ENCODE measurements at regions of chr4 and their contacts with region 1.

Region 1: DNA sequence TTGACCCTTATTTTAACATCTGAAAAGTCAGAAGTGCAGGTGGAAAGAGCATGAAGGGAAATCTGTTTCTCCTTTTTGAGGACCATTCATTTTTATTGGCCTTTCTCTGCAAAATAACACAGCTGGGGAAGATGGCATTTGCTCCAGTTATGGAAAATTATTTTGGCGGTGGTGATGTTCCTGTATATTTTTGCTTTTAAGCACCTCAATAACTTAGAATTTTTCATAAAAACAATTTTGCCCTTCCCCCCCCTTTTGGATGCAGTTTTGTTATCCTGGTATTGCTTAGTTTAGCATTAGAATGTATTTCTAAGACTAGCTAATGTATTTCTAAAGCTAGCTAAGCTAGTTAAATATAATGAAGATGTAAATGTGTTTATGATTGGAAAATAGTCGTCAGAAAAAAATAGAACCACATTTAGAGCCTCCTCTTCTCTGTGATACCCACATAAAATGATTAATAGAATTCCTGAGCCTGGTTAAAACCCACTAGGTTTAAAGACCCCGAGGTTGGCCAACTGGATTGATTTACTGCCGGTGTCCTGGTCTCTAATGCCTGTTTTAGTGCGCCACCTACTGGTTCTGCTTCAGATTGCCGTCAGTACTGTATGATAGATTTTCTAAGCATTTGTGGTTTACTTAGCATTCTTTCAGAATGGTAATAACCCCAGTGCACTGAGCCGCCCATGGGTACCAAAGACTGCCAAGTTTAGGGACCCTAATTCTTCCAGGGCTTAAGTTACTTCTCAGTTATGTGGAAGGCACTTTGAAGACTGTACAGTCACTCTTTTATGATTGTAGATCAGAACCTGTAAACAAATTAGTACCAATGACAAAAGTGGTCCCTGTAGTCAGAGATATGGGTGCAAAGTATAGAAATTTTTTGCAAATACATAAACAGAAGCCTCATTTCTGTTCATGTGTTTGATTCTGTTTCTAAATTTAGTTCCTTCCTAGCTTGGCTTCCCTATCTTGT is 11.4 kb downstream of the KLF3 start:
- DNase-seq: peak; percentile 88
- H3K4me3 ChIP-seq: no peak overlapping the region
- H3K27ac ChIP-seq: peak overlapping the region; percentile 99 to 100 (median 100)
- H3K4me1 ChIP-seq: peaks cover 0 to 100% (median 89%) of the 10 kb centered on the region in 4 donors
- H3K27me3 ChIP-seq: no peaks in the 10 kb centered on the region
- CTCF ChIP-seq: peak; percentile 87 to 95 (median 91)
- EP300 ChIP-seq: no peak
- POLR2A ChIP-seq: no peak

Region 2: GRCh38 chr4:38062088-38062893 is 613.1 kb before region 1 on chr4:
- intact Hi-C with region 1: loop called (anchors 5 kb)
- DNase-seq: peak; percentile 90
- H3K4me3 ChIP-seq: peak overlapping the region; percentile 5 to 31 (median 27)
- H3K27ac ChIP-seq: peak overlapping the region; percentile 71 to 80 (median 73)
- H3K4me1 ChIP-seq: peaks cover 0 to 64% (median 44%) of the 10 kb centered on the region in 4 donors
- H3K27me3 ChIP-seq: no peaks in the 10 kb centered on the region
- CTCF ChIP-seq: peak; percentile 71 to 82 (median 77)
- EP300 ChIP-seq: no peak
- POLR2A ChIP-seq: no peak

Region 3: DNA sequence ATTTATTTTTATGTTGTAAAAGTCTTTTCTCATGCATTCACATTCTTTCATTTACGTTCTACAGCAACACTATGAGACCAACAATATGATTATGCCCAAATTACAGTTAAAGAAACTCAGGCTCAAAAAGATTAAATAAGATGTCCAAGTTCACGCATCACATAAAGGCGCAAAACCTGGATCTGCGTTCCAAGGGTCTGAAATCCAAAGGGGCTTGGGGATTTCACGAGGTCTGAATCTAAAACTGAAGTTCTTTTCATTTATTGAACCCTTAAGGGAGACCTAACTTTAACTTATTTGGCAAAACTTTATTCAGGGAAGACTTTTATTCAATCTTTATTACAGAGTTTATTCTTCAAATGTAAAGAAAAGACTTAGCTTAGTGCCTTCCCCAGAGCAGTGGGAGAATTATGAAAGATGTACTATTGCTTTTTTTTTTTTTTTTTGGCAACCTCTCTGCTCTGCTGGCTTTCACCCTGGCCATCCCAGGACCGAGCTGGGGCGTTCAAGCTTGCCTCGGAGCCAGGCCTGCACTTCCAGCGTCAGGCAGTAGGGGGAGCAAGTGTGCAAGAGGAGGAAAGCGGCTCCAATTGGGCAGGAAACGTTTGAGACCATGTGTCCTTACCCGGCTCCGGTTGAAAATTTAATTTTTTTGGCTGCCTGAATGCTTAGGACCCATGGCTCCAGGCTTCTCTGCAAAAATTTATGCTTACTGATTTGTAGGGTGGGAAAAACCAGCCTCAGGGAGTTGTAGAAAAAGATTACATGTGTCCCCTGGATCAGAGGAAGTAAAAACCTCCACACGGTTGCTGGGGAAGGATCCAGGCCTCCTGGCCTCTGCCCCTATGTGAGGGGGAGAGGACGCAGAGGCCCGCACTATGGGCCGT is 355.7 kb before region 1 on chr4:
- intact Hi-C with region 1: loop called (anchors 1 kb)
- DNase-seq: peak; percentile 97
- H3K4me3 ChIP-seq: peak overlapping the region; percentile 7 to 36 (median 26)
- H3K27ac ChIP-seq: peak overlapping the region; percentile 74 to 91 (median 85)
- H3K4me1 ChIP-seq: peaks cover 0 to 21% (median 17%) of the 10 kb centered on the region in 4 donors
- H3K27me3 ChIP-seq: no peaks in the 10 kb centered on the region
- CTCF ChIP-seq: peak; percentile 93 to 99 (median 98)
- EP300 ChIP-seq: no peak
- POLR2A ChIP-seq: no peak

Region 4: DNA sequence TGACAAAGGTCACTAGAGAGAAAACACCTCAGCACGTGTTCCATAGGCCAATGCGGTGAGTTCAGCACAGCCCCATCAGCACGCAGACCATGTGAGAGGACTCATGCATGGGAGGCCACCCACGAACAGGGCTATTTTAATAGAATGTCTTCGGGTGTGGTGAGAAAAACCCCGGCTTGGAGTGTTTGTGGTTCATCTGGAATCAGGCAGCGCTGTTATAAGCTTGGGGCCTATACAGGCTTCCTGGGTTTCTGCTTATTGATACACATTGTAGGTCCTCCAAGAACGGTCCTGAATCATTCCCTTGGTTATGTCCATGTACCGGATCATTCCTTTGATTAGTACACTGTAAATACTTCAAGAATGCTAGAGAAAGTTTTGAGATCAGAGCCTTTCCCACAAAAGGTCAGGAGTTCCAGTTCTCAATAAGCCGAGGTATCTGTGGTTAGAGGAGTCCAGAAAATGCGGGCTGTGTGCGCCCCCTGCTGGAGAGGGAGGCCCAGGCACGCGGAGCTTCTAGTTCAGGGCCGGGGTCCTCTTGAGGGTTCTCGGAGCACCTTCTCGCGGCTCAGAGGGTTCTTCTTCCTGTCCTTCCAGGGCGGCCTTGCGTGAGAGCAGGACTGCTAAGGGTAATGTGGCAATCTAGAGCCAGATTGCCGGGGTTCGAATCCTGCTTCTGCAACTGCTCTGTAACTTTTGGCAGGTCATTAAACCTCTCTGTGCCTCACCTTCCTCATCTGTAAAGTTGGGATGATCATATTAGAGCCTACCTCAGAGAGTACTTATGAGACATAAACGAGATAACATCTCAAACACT is 55.6 kb after region 1 on chr4:
- intact Hi-C with region 1: loop called (anchors 2 kb)
- DNase-seq: peak; percentile 87
- H3K4me3 ChIP-seq: no peak overlapping the region
- H3K27ac ChIP-seq: no peak overlapping the region
- H3K4me1 ChIP-seq: peaks cover 0 to 9% (median 7%) of the 10 kb centered on the region in 4 donors
- H3K27me3 ChIP-seq: no peaks in the 10 kb centered on the region
- CTCF ChIP-seq: peak; percentile 91 to 98 (median 97)
- EP300 ChIP-seq: peak in 1 of 4 donors; percentile 4
- POLR2A ChIP-seq: no peak

Measured in sigmoid colon (tissue), 7 donors.